HCT116 (cell line): ENCODE measurements at regions of chr17 and their contacts with region 1.

Region 1: GRCh38 chr17:66165513-66166123 is 26.3 kb downstream of the CEP112 start:
- DNase-seq: peak; percentile 58
- ATAC-seq: peak; percentile 81
- H3K4me3 ChIP-seq: no peak overlapping the region
- H3K27ac ChIP-seq: no peak overlapping the region
- H3K4me1 ChIP-seq: no peaks in the 10 kb centered on the region
- H3K27me3 ChIP-seq: no peaks in the 10 kb centered on the region
- CTCF ChIP-seq: peak; percentile 71 to 93 (median 83)
- POLR2A ChIP-seq: no peak
- RAD21 ChIP-seq: peak; percentile 93

Region 2: DNA sequence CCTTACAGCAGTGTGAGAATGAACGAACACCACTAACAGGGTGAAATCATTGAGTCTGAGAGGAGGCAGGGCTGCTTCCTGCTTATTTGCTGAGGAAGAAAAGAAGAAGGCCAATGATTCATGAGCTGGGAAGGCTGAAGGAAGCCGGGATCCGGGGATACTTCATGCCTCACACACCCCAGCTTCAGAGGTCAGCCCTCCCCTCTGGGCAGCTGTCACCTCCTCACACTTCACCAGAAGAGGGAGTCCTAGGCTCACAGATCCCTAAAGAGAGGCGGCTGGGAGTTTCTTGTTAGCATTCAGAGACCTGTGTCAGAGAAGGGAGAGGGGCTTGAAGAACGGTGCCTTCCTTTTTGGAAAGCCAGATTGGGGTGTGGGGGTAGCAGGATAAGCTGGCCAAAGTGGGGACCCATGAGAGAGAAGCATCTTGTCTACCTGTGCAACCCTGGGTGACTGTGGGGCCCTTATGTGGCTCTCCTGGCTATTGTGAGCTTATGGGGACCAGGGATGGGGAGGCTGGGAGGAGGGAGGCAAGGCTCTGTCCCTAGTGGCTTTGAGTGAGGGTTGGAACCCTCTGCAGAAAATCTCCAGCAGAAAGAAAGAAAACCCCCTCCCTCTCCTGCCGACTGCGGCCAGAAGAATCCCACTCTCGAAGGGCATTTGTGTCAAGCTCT is 933.8 kb before region 1 on chr17:
- CTCF ChIA-PET with region 1: interaction called, 76 read pairs
- POLR2A ChIA-PET with region 1: no interaction called
- RAD21 ChIA-PET with region 1: interaction called, 5 to 24 read pairs
- intact Hi-C with region 1: loop called (anchors 1 kb)
- DNase-seq: peak; percentile 74
- ATAC-seq: peak; percentile 92
- H3K4me3 ChIP-seq: no peak overlapping the region
- H3K27ac ChIP-seq: no peak overlapping the region
- H3K4me1 ChIP-seq: peaks cover 24 to 32% of the 10 kb centered on the region in 2 experiments
- H3K27me3 ChIP-seq: no peaks in the 10 kb centered on the region
- CTCF ChIP-seq: peak; percentile 88 to 97 (median 95)
- POLR2A ChIP-seq: no peak
- RAD21 ChIP-seq: peak; percentile 98

Region 3: GRCh38 chr17:65278050-65278819 is 887.4 kb before region 1 on chr17:
- CTCF ChIA-PET with region 1: interaction called, 13 read pairs
- POLR2A ChIA-PET with region 1: no interaction called
- RAD21 ChIA-PET with region 1: no interaction called
- intact Hi-C with region 1: loop called (anchors 1 kb)
- DNase-seq: peak; percentile 57
- ATAC-seq: peak; percentile 99
- H3K4me3 ChIP-seq: no peak overlapping the region
- H3K27ac ChIP-seq: no peak overlapping the region
- H3K4me1 ChIP-seq: no peaks in the 10 kb centered on the region; a peak in 1 of 4 replicates
- H3K27me3 ChIP-seq: no peaks in the 10 kb centered on the region
- CTCF ChIP-seq: peak; percentile 59 to 94 (median 91); a peak in 5 of 6 replicates
- POLR2A ChIP-seq: no peak
- RAD21 ChIP-seq: peak; percentile 90

Region 4: DNA sequence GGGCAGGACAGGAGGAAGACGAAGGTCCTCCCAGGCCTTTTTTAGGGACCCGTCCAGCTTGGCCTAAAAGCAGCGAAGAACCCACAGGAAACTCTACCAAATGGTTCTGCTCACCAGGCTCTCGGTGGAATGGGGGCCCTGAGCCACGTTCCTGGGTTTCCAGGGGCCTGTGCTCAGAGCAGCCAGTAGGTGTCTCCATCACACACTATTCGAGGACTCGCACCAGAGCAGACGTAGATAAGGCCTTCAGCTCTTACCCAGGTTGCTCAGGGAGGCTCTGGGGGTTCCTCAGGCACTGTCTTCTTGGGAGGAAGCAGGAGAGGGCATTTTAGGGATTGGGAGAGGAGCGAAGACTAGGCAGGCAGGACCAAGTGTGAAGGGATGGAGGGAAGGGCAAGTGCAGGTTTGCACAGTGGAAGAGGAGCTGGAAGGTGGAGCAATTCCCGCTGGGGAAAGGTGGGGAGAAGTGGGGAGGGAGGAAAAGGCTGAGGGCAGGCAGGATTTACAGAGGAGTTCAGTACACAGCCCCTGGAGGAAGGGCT is 871.4 kb before region 1 on chr17:
- CTCF ChIA-PET with region 1: interaction called, 50 read pairs
- POLR2A ChIA-PET with region 1: no interaction called
- RAD21 ChIA-PET with region 1: interaction called, 7 to 10 read pairs
- intact Hi-C with region 1: loop called (anchors 1 kb)
- DNase-seq: peak; percentile 72
- ATAC-seq: peak; percentile 100
- H3K4me3 ChIP-seq: no peak overlapping the region
- H3K27ac ChIP-seq: no peak overlapping the region
- H3K4me1 ChIP-seq: peaks cover 4 to 16% of the 10 kb centered on the region in 2 experiments; a peak in 3 of 4 replicates
- H3K27me3 ChIP-seq: no peaks in the 10 kb centered on the region
- CTCF ChIP-seq: peak; percentile 88 to 97 (median 96)
- POLR2A ChIP-seq: no peak
- RAD21 ChIP-seq: peak; percentile 98

Region 5: DNA sequence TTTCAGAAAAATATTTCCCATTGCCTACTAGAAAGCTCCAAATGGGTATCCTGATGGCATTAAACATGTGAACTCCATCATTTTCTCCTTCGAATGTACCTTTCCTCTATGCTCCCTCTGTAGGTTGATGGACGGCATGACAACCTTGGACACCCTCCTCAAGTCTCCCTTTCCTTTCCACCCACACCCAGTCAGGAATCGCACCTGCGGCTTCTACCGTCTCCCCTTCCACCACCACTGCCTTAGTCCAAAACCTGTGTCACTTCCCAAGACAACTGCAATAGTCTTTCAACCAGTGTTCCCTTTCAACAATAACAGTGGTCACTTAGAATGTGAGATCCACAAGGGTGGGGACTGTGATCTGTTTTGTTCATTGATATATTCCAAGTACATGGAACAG is 371.0 kb before region 1 on chr17:
- CTCF ChIA-PET with region 1: interaction called, 4 read pairs
- POLR2A ChIA-PET with region 1: no interaction called
- RAD21 ChIA-PET with region 1: no interaction called
- intact Hi-C with region 1: loop called (anchors 10 kb)
- DNase-seq: peak; percentile 48
- ATAC-seq: peak; percentile 84
- H3K4me3 ChIP-seq: no peak overlapping the region
- H3K27ac ChIP-seq: no peak overlapping the region
- H3K4me1 ChIP-seq: 0 out of 4 replicates have a peak, but pooled peaks cover 0 to 3% of the 10 kb centered on the region in 2 experiments
- H3K27me3 ChIP-seq: no peaks in the 10 kb centered on the region
- CTCF ChIP-seq: peak; percentile 54 to 82 (median 75); a peak in 5 of 6 replicates
- POLR2A ChIP-seq: no peak
- RAD21 ChIP-seq: peak; percentile 74

Region 6: GRCh38 chr17:65988081-65988850 is 177.4 kb before region 1 on chr17:
- CTCF ChIA-PET with region 1: interaction called, 4 read pairs
- POLR2A ChIA-PET with region 1: no interaction called
- RAD21 ChIA-PET with region 1: no interaction called
- intact Hi-C with region 1: loop called (anchors 1 kb)
- DNase-seq: peak; percentile 66
- ATAC-seq: peak; percentile 97
- H3K4me3 ChIP-seq: no peak overlapping the region
- H3K27ac ChIP-seq: no peak overlapping the region
- H3K4me1 ChIP-seq: no peaks in the 10 kb centered on the region
- H3K27me3 ChIP-seq: no peaks in the 10 kb centered on the region
- CTCF ChIP-seq: peak; percentile 71 to 95 (median 89)
- POLR2A ChIP-seq: no peak
- RAD21 ChIP-seq: peak; percentile 95

Region 7: DNA sequence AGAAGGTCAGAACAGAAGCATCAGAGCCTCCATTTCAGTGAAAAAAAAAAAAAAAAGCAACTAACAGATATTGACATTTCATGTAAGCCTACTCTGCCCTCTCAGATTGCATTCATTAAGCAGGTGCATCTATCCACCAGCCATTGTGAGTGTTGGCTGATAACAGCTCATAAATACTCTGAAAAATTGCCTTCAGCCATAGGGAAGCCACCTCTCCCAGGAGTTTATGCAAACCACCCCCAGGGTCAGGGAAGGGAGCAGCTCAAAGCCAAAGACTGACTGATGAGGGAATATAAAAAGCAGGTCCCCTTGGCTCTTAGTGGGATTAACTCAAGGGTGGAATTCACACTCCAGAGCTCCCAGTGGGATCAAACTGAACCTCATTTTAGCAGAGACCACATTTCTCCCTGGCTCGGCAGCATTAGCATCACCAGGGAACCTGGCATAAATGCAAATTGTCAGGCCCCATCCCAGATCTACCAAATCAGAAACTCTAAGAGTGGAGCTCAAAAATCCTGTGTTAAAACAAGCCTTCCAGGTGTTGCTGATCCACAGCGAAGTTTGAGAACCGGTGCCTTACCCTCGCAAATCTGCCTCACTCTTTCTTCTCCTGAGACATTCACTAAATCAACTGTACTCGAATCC is 49.4 kb after region 1 on chr17:
- CTCF ChIA-PET with region 1: no interaction called
- POLR2A ChIA-PET with region 1: no interaction called
- RAD21 ChIA-PET with region 1: no interaction called
- intact Hi-C with region 1: no loop called
- DNase-seq: no peak
- ATAC-seq: no peak
- H3K4me3 ChIP-seq: no peak overlapping the region
- H3K27ac ChIP-seq: no peak overlapping the region
- H3K4me1 ChIP-seq: no peaks in the 10 kb centered on the region
- H3K27me3 ChIP-seq: peaks cover 4% of the 10 kb centered on the region
- CTCF ChIP-seq: no peak
- POLR2A ChIP-seq: no peak
- RAD21 ChIP-seq: no peak